ENCODE measurements at regions of chr7 and their contacts with region 1.

Region 1: DNA sequence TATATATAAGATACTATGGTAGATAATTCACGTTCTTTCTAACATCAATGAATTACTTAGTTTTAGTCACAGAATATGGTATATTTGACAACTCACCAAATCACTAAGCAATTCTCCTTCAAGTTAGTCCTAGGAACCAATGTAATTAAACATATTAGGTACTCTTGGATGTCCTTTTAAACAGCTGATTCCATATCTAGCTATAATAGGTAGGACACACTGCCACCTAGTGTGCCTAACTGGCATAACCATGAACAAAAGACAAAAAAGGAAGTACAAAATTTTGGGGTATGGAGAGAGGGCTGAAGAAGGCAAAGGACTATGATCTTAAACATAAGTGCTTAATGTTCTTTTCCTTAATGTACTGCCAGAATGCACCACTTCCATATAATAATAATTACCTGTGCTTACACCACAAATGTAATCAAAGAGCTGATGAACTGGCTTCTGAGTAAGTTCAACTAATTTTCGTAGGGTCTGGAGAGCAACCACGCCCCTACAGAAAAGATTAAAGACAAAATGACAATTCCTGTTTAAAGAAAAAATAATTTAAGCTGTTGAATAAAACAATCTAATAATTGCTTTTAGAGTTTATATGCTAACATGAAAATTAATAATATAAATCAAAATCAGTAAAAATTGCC is 28.7 kb downstream of the PNPLA8 start:
- DNase-seq: peak; percentile 52
- CTCF ChIP-seq: peak; percentile 83

Region 2: GRCh38 chr7:108079648-108080591 is 417.3 kb before region 1 on chr7:
- CTCF ChIA-PET with region 1: no interaction called
- POLR2A ChIA-PET with region 1: no interaction called
- DNase-seq: no peak
- CTCF ChIP-seq: no peak

Region 3: DNA sequence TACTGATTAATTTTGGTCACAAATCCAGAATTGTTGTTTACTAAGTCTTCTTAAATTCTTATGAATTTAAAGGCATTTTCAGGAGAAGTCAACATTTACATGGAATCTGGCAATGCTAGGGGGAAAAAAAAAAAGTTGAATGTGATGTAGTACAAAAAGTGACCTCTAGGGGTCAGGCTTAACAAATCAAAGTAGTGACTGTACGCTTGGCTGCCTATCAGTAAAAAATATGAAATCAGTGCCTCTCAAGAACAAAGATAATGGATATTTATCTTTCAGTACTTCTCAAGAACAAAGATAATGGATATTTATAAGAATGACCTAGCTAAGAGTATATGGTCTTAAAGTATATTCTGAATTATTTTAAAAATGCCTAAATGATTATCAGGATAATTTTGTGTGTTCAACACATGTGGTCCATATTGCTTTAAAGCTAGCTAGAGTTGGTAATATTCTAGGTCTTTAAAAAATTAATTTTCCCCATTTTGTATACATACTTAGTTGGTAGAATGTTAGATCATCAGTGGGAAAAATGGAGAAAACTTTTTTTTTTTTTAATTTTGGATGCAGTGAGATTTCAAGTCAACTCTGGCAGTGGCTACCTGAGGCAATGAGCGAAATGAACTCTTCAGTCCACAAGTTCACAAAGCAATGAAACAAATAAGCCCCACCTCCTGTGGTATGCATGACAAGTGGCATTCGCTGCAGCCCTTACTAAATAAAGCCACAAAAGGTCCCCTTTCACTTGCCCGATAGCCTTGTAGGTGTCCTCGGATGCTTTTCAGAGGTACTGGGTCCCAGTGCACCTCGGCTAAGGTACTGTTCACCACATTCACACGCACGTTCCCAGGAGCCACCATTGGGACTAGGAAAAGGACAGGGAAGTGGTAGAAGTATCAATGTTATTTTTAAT is 315.9 kb before region 1 on chr7:
- CTCF ChIA-PET with region 1: interaction called, 26 read pairs
- POLR2A ChIA-PET with region 1: no interaction called
- DNase-seq: peak; percentile 26
- CTCF ChIP-seq: peak; percentile 43

Region 4: DNA sequence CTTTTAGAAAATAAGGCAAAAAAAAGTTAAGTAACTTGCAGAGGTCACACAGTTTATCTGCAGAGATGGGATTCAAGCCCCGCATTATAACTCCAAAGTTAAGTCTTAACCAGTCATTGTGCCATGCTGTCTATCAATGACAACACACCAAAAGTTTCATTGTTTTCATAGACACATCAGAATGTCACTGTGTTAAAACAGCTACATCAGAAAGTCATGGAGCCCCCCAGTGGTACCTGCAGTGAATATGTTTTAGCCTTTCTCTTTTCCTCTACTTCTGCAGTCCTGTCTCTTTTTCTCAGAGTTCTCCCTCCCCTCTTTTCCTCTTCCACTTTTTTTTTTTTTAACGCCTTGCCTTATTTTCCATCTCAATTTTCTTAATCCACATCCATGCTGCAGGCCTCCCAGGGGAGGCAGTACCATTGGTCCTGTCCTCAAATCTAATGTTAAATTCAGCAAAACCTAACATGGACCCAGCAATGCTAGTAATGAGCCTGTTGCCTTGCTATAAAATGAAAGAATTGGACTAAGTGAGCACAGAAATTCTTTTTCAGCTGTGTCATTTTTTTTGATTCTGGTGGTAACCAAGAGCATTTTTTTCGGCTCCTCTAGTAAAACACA is 37.2 kb before region 1 on chr7:
- CTCF ChIA-PET with region 1: interaction called, 21 read pairs
- POLR2A ChIA-PET with region 1: no interaction called
- DNase-seq: peak; percentile 46
- CTCF ChIP-seq: peak; percentile 62

Region 5: DNA sequence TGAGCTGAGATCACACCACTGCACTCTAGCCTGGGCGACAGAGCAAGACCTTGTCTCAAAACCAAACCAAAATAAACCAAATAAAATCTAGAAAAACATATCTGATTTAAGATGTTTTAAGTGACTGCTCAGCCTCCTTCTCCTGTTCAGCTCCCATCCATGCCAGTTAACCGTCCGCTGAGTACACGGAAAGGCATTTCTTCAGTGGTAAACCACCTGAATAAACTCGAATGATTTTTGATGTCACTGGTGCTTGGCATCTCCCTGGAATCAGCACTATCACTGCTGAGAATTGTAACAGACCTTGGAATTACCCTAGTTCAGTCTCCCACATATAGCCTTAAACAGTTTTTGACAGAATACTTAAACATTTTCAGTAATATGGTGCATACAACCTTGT is 16.9 kb before region 1 on chr7:
- CTCF ChIA-PET with region 1: interaction called, 40 read pairs
- POLR2A ChIA-PET with region 1: no interaction called
- DNase-seq: no peak
- CTCF ChIP-seq: no peak

Region 6: DNA sequence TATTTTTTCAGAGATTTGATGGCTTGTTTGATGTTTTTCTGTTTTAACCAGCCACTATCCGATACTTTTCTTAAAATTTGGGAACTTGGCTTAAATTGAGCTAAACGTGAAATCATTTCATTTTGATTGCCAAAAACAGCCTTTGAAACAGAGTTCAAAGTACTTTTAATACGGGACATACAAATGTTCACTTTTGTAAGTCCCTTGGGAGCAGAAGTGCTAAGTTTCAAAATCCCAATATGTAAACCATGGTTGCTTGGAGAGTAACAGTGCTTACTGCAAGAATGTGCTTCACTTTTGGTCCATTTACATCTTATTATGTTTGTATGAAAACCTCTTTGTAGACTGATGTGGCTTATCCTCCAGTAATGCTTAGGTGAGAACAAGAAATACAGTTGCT is 17.8 kb after region 1 on chr7:
- CTCF ChIA-PET with region 1: interaction called, 29 read pairs
- POLR2A ChIA-PET with region 1: no interaction called
- DNase-seq: no peak
- CTCF ChIP-seq: no peak

Region 7: DNA sequence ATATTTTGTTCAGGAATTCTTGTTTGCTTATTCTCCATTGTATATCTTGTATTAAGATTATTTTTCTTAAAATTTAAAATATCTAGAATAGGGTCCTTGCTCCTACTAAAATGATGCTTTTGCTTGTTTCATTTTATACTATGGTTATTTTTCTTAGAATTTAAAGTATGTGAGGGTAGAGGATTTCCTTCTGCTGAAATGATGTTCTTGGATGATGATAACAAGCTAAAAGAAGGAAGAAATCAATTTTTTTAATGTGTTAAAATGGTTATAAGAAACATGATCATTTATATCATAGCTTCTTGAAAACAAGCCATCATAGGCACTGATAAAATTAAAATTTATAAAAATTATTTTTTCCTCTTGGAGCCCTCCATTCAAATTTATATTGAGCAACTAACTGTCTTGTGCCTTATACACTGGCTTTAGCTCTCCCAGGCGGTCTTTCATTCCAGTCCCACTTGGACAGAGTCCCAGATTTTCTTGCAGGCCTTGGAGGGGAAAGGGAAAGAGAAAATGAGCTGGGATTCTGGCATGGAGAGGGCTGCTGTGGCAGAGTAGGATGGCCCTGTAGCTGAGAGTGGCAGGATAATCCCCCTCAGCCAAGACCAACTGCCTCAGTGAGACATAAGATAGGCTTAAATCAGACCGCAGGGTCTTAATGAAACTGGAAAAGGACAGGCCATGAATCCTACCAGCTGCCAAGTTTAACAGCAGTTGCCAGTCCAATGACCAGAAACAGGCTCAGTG is 132.6 kb after region 1 on chr7:
- CTCF ChIA-PET with region 1: no interaction called
- POLR2A ChIA-PET with region 1: no interaction called
- DNase-seq: no peak
- CTCF ChIP-seq: no peak

Region 8: GRCh38 chr7:108684629-108685028 is 187.4 kb after region 1 on chr7:
- CTCF ChIA-PET with region 1: no interaction called
- POLR2A ChIA-PET with region 1: no interaction called
- DNase-seq: no peak
- CTCF ChIP-seq: no peak

Region 9: DNA sequence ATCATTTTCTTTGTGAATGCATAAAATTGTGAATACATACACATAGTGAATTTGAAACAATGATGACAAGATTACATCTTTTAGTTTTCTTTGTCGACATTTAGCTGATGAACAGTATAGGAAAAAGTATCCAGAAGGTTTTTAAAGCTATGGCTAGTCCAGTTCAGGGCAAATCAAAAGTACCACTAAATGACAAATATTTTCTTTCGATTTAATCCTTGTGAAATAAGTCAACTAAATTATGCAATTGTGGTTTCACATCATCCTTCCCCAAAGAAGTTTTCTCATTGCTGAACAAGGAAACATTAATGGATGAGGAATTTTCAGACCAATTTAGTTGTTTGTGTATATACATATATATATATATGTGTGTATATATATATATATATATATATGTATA is 846.5 kb after region 1 on chr7:
- CTCF ChIA-PET with region 1: no interaction called
- POLR2A ChIA-PET with region 1: no interaction called
- DNase-seq: no peak
- CTCF ChIP-seq: no peak